Vagina (tissue), 2 donors: ENCODE measurements at regions of chr14 and their contacts with region 1.

Region 1: GRCh38 chr14:59055439-59056045 is 132.9 kb upstream of the DAAM1 start:
- DNase-seq: no peak
- H3K4me3 ChIP-seq: no peak overlapping the region
- H3K27ac ChIP-seq: no peak overlapping the region
- H3K4me1 ChIP-seq: no peaks in the 10 kb centered on the region
- H3K27me3 ChIP-seq: no peaks in the 10 kb centered on the region
- CTCF ChIP-seq: peak; percentile 60 to 78 (median 71)
- POLR2A ChIP-seq: no peak

Region 2: DNA sequence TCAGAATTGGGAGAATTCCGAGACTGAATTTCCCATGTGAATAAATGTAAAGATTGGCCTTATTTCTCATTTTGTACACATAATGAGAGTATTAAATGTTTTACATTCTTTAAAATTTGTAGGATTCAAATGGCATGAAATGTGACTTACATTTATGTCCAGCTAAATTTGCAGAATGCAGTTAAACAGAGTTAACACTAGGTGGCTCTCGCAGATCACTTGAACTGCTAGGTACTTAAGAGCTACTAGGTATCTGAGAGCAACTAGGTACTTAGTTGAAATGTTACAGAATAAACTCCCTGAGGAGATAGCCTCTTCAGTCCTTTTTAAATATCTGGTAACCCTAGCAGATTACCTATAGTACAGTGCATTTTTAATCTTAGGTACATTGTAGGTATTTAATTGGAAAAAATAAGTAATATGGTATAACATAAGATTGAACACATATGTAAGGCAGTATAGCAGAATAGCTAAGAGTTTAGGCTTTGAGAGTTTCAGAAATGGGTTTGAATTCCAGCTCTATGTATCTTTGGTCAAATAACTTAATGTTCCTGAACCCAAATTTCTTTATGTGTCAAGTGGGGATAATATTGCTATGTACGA is 554.2 kb before region 1 on chr14:
- intact Hi-C with region 1: loop called (anchors 5 kb)
- DNase-seq: no peak
- H3K4me3 ChIP-seq: no peak overlapping the region
- H3K27ac ChIP-seq: no peak overlapping the region
- H3K4me1 ChIP-seq: no peaks in the 10 kb centered on the region
- H3K27me3 ChIP-seq: no peaks in the 10 kb centered on the region
- CTCF ChIP-seq: peak; percentile 56 to 67 (median 57)
- POLR2A ChIP-seq: no peak

Region 3: DNA sequence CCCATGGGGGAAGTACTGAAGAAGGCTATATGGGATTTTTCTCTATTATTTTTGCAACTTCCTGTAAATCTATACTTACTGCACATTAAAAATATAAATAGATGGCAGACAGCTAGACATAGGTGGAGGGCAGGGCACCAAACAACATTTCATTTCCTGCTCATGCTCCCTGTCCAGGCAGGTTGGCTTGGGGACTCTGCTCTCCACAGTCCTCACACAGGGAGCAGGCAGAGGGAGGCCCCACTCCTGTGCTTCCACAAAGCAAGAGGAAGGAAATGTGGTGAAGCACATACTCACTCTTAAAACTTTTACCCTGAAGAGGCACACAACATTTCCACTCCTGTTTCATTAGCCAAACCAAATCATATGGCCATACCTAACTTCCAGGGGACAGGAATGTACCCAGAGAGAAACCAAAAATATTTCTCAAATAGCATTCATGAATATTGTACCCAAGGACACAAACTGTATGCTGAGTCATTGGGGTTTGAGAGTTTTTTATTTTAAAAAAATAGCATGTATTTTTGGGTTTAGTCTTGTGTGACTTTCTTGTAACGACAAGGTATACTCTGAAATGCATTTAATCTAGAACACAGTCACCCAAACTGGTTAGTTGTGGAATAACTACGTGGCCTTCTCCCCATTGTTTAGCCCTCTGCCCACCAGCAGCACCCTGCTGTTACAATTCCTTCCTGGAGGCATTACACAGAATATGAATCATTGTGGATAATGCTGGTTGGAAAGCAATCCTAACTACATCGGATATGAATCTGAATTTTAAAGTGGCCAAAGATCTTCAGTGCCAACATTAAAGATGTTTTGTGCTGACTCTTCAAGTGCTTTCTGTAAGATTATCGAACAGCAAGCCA is 774.2 kb after region 1 on chr14:
- intact Hi-C with region 1: no loop called
- DNase-seq: no peak
- H3K4me3 ChIP-seq: no peak overlapping the region
- H3K27ac ChIP-seq: no peak overlapping the region
- H3K4me1 ChIP-seq: no peaks in the 10 kb centered on the region
- H3K27me3 ChIP-seq: no peaks in the 10 kb centered on the region
- CTCF ChIP-seq: no peak
- POLR2A ChIP-seq: no peak